Activated CD8-positive, alpha-beta T cell treated with anti-CD3 and anti-CD28 coated beads for 36 hours (primary cell): ENCODE measurements at regions of chr15 and their contacts with region 1.

Region 1: GRCh38 chr15:71448688-71449114 is 333.4 kb downstream of the THSD4 start:
- DNase-seq: peak; percentile 4
- ATAC-seq: no peak
- H3K4me3 Mint-ChIP-seq: no peak overlapping the region
- H3K27ac Mint-ChIP-seq: no peak overlapping the region
- H3K4me1 Mint-ChIP-seq: no peaks in the 10 kb centered on the region
- H3K27me3 Mint-ChIP-seq: no peaks in the 10 kb centered on the region
- CTCF ChIP-seq: peak; percentile 63

Region 2: DNA sequence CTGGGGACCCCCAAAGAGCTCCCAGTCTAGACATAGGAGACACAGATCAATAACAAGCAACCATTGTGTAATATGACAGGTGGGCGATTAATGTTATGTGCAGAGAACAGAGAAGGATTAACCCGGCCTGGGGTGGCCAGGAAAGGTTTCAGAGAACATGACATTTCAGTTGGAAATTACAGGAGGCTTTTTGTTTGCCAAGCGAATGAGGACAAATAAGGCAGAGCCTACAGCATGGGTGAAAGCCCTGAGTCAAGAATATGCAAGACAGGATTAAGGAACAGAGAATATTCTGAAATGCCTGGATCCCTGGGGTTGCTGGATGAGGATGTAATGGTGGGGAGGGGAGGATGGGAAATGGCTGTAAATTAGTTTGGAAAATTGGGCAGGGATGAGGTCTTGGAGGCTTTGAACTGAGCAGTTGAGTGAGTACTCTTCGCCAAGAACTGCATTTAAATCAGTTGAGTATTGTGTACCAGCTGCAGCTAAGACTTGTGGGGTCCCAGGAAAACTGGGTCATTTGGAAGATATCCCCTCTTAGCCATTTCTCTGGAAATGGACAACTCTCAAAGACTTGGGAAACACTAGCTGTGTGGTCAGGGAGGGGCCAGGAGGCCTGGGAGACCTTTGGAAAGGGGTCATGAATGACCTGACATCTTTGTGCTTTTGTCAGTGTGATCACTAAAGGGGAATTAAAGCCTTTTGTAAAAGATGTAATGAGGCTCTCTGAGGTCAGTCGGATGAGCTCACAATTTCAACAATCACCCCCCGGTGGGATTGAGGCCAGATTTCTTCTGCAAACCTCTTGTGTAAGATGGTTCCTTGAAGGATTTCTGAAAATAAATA is 163.1 kb after region 1 on chr15:
- CTCF ChIA-PET with region 1: no interaction called
- POLR2A ChIA-PET with region 1: no interaction called
- intact Hi-C with region 1: no loop called
- DNase-seq: no peak
- ATAC-seq: no peak
- H3K4me3 Mint-ChIP-seq: no peak overlapping the region
- H3K27ac Mint-ChIP-seq: no peak overlapping the region
- H3K4me1 Mint-ChIP-seq: no peaks in the 10 kb centered on the region
- H3K27me3 Mint-ChIP-seq: peaks cover 7% of the 10 kb centered on the region
- CTCF ChIP-seq: no peak

Region 3: DNA sequence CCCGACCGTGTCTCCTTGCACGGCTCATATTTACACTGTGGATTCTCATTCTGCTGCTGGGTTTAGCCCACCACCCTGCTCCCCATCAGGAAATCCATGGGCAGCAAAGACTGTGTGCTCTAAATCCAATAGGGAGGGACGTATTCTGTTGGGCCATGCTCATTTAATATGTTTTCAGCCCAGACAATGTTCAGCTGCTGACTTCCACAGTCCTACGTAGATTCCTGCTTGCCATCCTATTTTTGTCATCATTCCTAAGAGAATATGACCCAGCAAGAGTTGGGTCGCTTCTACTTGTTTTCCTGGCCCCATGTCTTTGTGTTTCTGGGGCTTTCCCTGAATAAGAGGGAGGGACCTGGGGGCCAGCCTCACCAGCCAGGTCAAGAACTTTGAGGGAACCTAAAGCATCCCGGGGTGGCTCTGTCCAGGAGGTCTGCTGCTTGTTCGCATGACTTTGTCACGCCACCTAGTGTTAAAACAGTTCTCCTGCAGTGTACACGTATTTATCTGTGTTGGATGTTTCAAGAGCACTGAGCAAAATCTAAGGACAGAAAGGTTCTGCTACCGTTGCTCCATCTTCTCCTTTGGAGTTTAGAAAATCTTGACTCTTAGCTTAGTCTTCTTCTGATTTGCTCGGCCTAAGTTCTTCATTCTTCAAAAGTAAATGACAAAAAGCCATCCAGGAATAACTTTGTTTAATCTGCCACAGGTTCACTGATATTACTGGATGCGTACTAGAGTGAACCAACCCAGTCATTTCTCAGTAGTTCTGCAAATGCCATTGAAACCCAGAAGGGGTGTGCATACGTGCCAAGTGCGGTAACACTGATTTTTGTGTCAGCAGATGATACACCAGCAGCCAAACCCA is 281.8 kb after region 1 on chr15:
- CTCF ChIA-PET with region 1: interaction called, 3 read pairs
- POLR2A ChIA-PET with region 1: no interaction called
- intact Hi-C with region 1: loop called (anchors 10 kb)
- DNase-seq: peak; percentile 50
- ATAC-seq: peak; percentile 79
- H3K4me3 Mint-ChIP-seq: no peak overlapping the region
- H3K27ac Mint-ChIP-seq: no peak overlapping the region
- H3K4me1 Mint-ChIP-seq: no peaks in the 10 kb centered on the region
- H3K27me3 Mint-ChIP-seq: peaks cover 9% of the 10 kb centered on the region
- CTCF ChIP-seq: peak; percentile 74

Region 4: DNA sequence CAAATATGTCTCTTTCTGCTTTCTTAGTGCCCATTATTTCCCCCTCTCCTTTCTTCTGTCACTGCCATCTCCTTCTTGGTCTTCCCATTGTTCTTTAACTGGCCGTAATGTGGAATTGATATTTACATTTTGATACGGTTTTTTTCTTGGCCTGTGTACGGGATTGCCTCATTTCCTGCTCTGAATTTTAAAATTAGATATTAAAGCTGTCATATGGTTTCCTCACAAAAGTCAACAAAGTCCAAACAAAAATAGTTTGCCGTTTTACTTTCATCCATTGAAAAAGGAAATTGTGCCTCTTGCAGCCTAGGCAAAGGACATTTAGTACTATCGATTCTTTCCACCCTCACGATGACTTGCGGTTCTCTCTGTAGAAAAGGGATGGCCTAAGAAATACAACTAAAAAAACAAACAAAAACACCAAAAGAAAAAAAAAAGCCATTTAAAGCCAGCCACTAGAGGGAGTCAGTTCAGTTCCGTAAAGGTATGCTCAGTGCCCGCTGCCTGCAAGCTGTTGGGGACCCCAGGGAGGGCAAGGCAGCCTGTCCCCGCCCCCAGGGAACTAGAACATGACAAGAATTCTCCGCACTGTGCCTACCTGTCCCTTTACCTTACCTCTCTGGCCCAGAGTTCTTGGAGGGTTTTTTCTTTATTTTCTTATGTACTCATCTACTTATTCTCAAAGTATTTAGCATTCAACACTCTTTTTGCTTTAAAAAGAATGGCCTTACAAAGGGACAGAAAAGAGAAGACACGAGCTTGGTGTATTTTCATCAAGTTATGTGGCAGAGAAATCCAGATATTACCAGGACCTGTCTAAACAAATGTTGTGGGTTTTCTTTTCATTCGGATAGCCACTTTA is 331.6 kb after region 1 on chr15:
- CTCF ChIA-PET with region 1: no interaction called
- POLR2A ChIA-PET with region 1: no interaction called
- intact Hi-C with region 1: no loop called
- DNase-seq: peak; percentile 46
- ATAC-seq: peak; percentile 66
- H3K4me3 Mint-ChIP-seq: no peak overlapping the region
- H3K27ac Mint-ChIP-seq: no peak overlapping the region
- H3K4me1 Mint-ChIP-seq: peaks cover 6% of the 10 kb centered on the region
- H3K27me3 Mint-ChIP-seq: peaks cover 6% of the 10 kb centered on the region
- CTCF ChIP-seq: peak; percentile 82